Motor neuron (in vitro differentiated cells): ENCODE measurements at regions of chr22 and their contacts with region 1.

Region 1: GRCh38 chr22:20156611-20157429 is 6.0 kb upstream of the CCDC188 start:
- ATAC-seq: peak; percentile 37 to 77 (median 58)
- H3K4me3 ChIP-seq: no peak overlapping the region
- H3K27ac ChIP-seq: no peak overlapping the region
- H3K4me1 ChIP-seq: peaks cover 36 to 40% of the 10 kb centered on the region in 2 donors

Region 2: DNA sequence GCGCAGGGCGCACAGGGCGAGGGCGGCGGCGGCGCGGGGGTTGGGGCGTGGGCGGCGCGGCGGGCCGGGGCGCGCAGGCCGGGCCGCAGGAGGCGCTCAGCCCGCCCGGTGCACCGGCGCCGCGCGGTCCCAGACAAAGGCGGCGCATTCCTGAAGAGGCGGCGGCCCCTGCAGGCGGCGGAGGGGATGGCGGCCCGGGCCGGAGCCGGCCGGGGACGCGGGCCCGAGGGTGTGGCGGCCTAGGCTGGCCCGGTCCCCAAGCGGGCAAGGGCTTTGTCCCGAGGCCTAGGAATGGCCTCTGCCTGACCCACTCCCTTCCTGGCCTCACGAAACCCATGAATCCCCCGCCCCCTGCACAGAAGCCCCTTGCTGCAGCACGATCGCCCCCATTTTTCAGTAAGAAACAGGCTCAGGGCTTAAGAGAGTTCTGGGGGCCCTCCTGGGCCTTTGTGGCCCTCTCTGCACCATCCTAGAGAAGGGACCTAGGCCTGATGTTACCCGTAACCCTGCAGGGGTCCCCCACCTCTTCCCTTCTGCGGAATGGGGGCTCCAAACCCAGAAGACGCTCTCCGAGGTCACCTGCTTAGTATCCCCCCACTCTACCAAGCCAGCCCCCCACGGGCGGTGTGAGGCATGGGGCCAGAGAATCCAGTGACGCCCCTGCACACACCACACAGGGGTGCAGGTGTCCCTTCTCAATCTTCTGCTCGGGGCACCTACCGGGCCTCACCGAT is 111.6 kb after region 1 on chr22 and contains the start of gene RTN4R:
- in situ Hi-C with region 1: loop called in 3 of 9 experiments (anchors 10 to 25 kb)
- ATAC-seq: peak; percentile 38 to 81 (median 75)
- H3K4me3 ChIP-seq: peak within 1 kb of the TSS; percentile 45 to 76 (median 62)
- H3K27ac ChIP-seq: peak within 1 kb of the TSS; percentile 70 to 74
- H3K4me1 ChIP-seq: peaks cover 26 to 34% of the 10 kb centered on the region in 2 donors
- total RNA-seq, gene RTN4R: 1.0 to 17.7 (median 6.3) TPM

Region 3: DNA sequence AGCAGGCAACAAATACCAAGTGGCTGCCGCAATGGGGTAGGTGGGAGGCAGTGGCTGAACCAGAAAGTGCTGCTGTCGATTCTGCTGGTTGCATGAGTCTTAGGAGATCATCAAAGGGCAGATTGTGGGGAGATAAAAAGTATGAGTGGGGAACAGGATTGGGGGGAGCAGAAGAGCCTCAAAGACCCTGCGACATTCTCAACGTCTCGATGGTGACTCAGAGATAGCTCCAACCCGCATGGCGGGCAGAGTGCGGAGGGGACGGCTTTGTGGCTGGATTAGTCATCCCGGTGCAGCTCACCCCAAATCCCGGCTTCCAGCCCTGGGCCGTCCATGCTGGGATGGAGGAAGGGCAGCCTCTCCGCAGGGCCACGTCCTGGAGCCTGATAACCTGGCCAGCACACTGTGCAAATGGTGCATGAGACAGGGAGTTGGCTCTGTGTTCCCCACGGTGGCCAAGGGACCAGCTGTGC is 122.9 kb after region 1 on chr22:
- in situ Hi-C with region 1: loop called in 7 of 9 experiments (anchors 5 to 25 kb)
- ATAC-seq: peak in 1 of 8 experiments; percentile 7
- H3K4me3 ChIP-seq: no peak overlapping the region
- H3K27ac ChIP-seq: no peak overlapping the region
- H3K4me1 ChIP-seq: peaks cover 6 to 7% of the 10 kb centered on the region in 2 donors

Region 4: DNA sequence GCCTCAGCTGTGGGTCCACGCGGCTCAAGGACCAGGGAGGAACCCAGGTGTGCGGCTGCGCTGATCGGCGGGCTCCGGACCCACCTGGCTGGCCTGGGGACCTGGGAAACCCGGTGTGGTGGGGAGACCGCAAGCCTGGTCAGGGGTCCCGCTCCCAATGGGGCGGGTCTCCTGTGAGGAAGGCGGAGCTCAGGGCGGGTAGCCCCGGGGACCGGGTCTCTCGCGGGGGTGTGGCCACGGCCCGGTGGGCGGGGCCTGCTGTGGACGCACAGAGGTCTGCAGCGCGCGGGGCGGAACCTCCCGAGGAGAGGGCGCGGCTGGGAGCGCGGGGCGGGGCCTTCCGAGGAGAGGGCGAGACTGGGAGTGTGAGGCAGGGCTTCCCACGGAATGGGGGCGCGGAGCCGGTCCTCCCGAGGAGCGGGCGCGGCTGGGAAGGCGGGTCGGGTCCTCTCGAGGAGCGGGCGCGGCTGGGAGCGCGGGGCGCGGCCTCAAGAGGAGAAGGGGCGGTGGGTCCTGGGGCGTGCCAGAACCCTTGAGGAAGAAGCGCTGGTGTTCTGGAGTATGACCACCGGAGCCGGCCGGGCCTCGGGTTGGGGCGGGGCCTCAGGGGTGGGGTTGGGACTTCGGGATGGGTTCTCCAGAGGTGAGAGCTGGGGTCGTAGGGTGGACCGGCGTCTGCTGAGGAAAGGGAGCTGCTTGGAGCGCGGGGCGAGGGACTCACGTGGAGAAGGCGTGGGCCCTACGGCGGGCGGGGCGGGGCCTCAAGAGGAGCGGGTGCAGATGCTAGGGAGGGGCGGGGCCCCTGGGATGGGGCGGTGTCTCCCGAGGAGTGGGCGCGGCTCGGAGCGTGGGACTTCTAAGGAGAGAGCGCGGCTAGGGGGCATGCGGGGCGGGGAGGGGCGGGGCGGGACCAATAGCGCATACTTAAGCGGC is 142.2 kb after region 1 on chr22:
- in situ Hi-C with region 1: loop called in 3 of 9 experiments (anchors 10 to 25 kb)
- ATAC-seq: peak; percentile 80 to 86 (median 82)
- H3K4me3 ChIP-seq: peak overlapping the region; percentile 33 to 50 (median 46)
- H3K27ac ChIP-seq: no peak overlapping the region
- H3K4me1 ChIP-seq: peaks cover 3% of the 10 kb centered on the region in 2 donors

Region 5: DNA sequence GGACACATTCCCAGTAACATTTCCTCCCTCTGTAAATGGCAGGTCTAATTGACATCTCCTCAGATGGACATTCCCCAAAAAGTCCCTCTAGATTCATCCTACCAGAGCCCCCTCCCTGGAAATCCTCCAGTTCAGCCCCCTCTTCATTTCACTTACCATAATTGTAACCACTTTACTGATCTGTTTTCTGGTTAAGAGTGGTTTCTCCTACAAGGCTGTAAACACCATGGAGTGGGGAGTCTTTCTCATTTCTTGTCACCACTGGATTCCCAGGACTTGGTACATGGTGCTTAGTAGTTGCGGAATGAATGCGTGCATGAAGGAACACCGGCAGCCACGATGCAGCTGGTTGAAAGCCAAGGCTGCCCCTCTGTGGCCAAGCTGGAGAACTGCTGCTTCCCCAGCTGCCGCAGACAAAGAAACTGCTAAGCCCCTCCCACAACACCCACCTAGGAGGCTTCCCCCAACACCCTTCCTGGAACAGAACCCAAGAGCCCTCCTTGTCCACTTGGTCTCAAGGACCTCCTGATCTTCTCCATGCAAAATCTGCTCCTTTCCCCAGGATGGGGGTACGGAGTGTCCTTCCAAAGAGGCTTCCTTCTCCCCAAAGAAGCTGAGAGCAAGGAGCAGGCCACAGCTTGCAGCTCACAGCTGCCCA is 299.4 kb after region 1 on chr22:
- in situ Hi-C with region 1: loop called in 2 of 9 experiments (anchors 25 kb)
- ATAC-seq: peak; percentile 86 to 97 (median 90)
- H3K4me3 ChIP-seq: no peak overlapping the region
- H3K27ac ChIP-seq: peak overlapping the region in 1 of 2 donors; percentile 18
- H3K4me1 ChIP-seq: peaks cover 2 to 6% of the 10 kb centered on the region in 2 donors